ENCODE measurements at regions of chr18 and their contacts with region 1.

Region 1: GRCh38 chr18:31722369-31722957 is 38.1 kb upstream of the B4GALT6 start:
- H3K4me3 Mint-ChIP-seq: no peak overlapping the region
- H3K27ac Mint-ChIP-seq: no peak overlapping the region
- H3K4me1 Mint-ChIP-seq: peaks cover 16% of the 10 kb centered on the region
- H3K27me3 Mint-ChIP-seq: peaks cover 27% of the 10 kb centered on the region

Region 2: DNA sequence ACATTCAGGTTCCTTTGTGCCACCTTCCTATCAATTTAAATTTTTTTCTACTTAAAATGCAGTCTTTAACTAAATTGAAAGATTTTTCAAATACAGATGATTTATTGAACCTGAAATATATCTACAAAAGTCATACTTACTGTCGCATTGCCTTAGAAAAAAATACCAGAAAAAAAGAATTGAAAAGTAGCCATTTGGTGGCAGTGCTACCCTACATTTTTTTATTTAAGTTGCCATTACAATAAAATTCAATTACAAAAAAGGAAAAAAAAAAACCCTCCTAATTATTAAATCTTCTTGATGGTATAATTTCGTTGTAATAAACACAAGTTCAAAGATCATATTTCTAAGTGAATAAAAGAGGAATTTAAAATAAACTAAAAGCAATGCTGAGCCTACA is 723.3 kb before region 1 on chr18:
- intact Hi-C with region 1: loop called (anchors 5 kb)
- H3K4me3 Mint-ChIP-seq: no peak overlapping the region
- H3K27ac Mint-ChIP-seq: no peak overlapping the region
- H3K4me1 Mint-ChIP-seq: no peaks in the 10 kb centered on the region
- H3K27me3 Mint-ChIP-seq: peaks cover 13% of the 10 kb centered on the region

Region 3: DNA sequence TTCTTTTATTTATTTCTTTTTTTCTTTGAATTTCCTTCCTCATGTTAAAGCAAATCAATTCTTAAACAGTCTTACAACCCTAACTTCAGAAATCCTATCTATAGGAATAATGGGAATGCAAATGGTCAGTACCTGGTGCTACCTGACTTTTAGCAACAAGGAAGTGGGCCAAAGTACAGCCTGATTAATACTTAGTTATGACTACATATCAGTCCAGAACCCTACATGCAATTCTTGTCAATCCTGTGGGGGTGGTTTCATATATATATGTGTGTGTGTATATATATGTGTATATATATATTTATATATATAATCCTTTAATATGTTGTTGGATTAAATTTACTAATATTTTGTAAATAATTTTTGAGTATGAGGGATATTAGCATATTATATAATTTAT is 235.3 kb after region 1 on chr18:
- intact Hi-C with region 1: loop called (anchors 5 kb)
- H3K4me3 Mint-ChIP-seq: no peak overlapping the region
- H3K27ac Mint-ChIP-seq: no peak overlapping the region
- H3K4me1 Mint-ChIP-seq: no peaks in the 10 kb centered on the region
- H3K27me3 Mint-ChIP-seq: no peaks in the 10 kb centered on the region